Activated T-helper 2 cell treated with anti-CD3 and anti-CD28 coated beads, Interferon-gamma antibody, Interleukin-2, Interleukin-4, amounts not matched to agents 10 μg/mL and 5 μg/mL and 100 μg/mL, durations not matched to agents 14 hours and 24 hours and 36 hours (primary cell): ENCODE measurements at regions of chr4 and their contacts with region 1.

Region 1: GRCh38 chr4:111330786-111331185 is 707.9 kb upstream of the PITX2 start:
- DNase-seq: no peak
- H3K4me3 Mint-ChIP-seq: no peak overlapping the region
- H3K27ac Mint-ChIP-seq: no peak overlapping the region
- H3K4me1 Mint-ChIP-seq: no peaks in the 10 kb centered on the region
- H3K27me3 Mint-ChIP-seq: no peaks in the 10 kb centered on the region

Region 2: DNA sequence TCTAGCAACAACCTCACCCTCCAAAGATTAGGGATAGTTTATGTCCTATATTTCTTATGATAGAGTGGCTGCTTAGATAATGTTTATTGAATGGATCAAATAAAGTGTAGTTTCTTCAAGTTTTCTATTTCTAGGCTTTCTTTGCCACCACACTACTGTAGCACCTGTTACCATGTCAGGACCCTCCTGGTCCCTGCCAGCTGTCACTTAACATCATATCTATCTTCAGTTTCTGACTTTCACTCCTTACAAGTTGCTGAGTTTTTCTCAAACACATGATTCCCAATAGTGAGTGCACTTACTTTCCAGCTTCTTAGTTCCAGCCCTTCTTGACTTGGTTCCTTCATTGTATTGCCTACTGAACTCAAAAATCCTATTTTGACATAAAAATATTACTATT is 114.0 kb before region 1 on chr4:
- intact Hi-C with region 1: no loop called
- DNase-seq: no peak
- H3K4me3 Mint-ChIP-seq: no peak overlapping the region
- H3K27ac Mint-ChIP-seq: no peak overlapping the region
- H3K4me1 Mint-ChIP-seq: no peaks in the 10 kb centered on the region
- H3K27me3 Mint-ChIP-seq: no peaks in the 10 kb centered on the region

Region 3: GRCh38 chr4:111303806-111304205 is 27.0 kb before region 1 on chr4:
- intact Hi-C with region 1: no loop called
- DNase-seq: no peak
- H3K4me3 Mint-ChIP-seq: no peak overlapping the region
- H3K27ac Mint-ChIP-seq: no peak overlapping the region
- H3K4me1 Mint-ChIP-seq: no peaks in the 10 kb centered on the region
- H3K27me3 Mint-ChIP-seq: no peaks in the 10 kb centered on the region

Region 4: DNA sequence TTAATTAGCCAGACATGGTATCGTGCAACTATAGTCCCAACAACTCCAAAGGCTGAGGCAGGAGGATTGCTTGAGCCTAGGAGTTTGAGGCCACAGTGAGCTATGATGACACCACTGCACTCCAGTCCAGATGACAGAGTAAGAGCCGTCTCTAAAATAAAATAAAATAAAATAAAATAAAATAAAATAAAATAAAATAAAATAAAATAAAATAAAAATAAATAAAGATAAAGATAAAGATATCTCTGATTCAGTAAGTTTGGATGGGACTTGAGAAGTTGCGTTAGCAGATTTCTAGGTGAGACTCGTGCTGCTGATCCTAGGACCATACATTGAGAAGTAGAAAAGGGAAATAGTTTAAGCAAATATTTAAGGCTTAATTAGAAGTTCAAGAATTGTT is 559.6 kb after region 1 on chr4:
- intact Hi-C with region 1: loop called (anchors 10 kb)
- DNase-seq: no peak
- H3K4me3 Mint-ChIP-seq: no peak overlapping the region
- H3K27ac Mint-ChIP-seq: no peak overlapping the region
- H3K4me1 Mint-ChIP-seq: no peaks in the 10 kb centered on the region
- H3K27me3 Mint-ChIP-seq: no peaks in the 10 kb centered on the region